GM10248 (cell line): ENCODE measurements at regions of chr6 and their contacts with region 1.

Region 1: DNA sequence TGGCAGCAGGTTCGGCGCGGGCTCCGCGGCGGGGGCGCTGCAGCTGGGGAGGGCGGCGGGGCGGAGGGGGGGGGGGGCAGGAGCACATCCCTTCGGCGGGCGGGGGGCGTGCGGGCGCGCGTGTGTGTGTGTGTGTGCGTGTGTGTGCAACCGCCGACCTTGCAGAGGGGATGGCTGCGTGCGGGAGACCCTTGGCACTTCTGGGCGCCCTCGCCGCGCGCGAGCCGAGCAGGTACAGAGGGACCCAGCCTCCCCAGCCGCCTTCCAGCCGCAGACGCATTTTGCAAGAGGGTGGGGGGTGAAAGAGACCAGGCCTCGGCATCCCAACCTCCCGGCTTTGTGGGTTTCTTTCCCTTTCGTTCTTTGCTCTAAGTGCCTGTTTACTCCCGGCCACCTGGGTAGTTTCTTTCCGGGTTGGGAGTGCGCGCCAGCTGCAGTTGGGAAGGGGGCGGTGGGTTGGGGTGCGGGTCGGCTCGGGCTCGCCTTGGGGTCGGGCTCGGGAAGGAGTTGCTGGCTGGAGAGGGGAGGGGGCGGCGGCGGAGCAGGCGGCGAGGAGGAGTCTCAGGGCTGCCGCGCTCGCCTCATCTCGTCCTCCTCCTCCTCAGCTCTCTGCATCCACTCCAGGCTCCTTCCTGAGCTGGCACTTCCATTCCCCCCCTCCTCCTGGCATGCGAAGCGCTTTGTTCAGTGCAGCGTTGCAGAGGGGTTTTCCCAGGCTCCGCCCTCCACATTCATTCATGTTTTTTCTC is 620 bp downstream of the HIVEP1 start:
- DNase-seq: peak; percentile 40
- CTCF ChIP-seq: no peak

Region 2: DNA sequence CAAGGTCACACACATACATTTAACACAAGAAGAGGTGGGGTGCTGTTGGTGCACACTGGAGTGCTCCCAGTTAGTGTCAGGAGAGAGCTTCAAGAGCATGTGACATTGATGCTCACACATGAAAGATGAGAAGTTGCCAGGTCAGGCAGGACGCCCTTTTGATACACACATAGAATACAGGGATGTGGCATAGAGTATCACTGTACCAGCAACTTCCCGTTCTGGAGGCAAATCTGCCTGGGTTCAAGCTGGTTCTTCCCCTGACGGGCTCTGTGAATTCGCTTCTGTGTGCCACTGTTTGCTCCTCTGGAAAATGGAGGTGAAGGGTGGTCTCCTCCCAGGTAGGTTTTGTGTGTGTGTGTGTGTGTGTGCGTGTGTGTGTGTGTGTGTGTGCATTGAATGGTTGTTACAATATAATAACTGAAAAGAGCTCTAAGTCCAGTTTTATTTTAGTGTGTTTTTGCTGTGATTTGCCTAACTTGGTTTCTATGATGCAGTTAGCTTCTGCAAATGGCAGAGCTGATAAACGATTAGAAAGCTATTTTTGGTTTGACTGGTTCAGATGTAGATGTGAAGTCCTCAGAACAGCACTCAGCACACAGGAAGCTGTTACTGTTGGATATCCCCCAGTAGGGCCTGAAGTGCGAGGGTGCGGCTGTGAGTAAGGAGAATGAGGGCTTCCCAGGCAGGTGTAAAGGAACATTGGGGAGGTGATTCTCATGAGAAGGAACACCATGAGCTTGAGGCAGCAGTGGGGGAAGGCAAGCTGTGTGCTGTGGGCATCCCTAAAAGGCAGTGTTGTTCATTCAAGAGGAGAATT is 52.8 kb after region 1 on chr6:
- CTCF ChIA-PET with region 1: no interaction called
- POLR2A ChIA-PET with region 1: interaction called, 15 read pairs
- DNase-seq: peak; percentile 42
- CTCF ChIP-seq: no peak

Region 3: DNA sequence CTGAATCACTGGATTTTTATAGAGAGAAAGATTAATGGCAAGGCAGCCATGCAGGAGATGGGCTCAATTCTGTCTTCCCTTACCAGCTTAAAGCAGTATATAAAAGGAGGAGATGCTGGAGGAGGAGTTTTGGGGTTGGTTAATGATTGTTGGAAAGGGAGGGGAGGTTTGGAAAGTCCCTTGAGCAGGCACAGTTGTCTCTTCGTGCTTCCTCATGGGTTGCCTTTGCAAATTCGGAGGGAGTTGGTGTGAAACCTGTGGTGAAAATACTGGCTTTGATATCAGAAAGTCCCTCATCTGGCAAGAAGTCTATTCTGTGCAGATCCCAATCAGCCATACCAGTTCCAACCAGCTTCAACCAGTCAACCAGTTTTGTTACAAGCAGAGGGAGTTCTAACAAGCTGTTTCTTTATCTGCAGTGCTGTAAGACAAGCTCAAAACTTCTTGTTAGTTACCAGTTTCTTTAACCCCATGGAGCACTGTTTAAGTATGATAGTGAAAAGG is 106.4 kb after region 1 on chr6:
- CTCF ChIA-PET with region 1: no interaction called
- POLR2A ChIA-PET with region 1: no interaction called
- DNase-seq: peak; percentile 61
- CTCF ChIP-seq: no peak

Region 4: GRCh38 chr6:12150812-12151432 is 138.2 kb after region 1 on chr6:
- CTCF ChIA-PET with region 1: no interaction called
- POLR2A ChIA-PET with region 1: interaction called, 10 read pairs
- DNase-seq: no peak
- CTCF ChIP-seq: no peak